Panc1 (cell line): ENCODE measurements at regions of chr4 and their contacts with region 1.

Region 1: GRCh38 chr4:2624782-2625530 is 88.5 kb downstream of the FAM193A start:
- DNase-seq: no peak
- ATAC-seq: no peak
- H3K4me3 ChIP-seq: no peak overlapping the region
- H3K27ac ChIP-seq: no peak overlapping the region
- H3K4me1 ChIP-seq: no peaks in the 10 kb centered on the region
- H3K27me3 ChIP-seq: no peaks in the 10 kb centered on the region
- CTCF ChIP-seq: no peak

Region 2: GRCh38 chr4:2320152-2320551 is 304.8 kb before region 1 on chr4:
- CTCF ChIA-PET with region 1: no interaction called
- POLR2A ChIA-PET with region 1: interaction called, 13 read pairs
- in situ Hi-C with region 1: no loop called
- intact Hi-C with region 1: no loop called
- DNase-seq: no peak
- ATAC-seq: no peak
- H3K4me3 ChIP-seq: no peak overlapping the region
- H3K27ac ChIP-seq: no peak overlapping the region
- H3K4me1 ChIP-seq: no peaks in the 10 kb centered on the region
- H3K27me3 ChIP-seq: no peaks in the 10 kb centered on the region
- CTCF ChIP-seq: no peak